Gastrocnemius medialis (tissue), 4 donors: ENCODE measurements at regions of chr1 and their contacts with region 1.

Region 1: GRCh38 chr1:202009326-202010179 is 834 bp upstream of the ELF3 start:
- DNase-seq: peak; percentile 33
- ATAC-seq: peak; percentile 72 to 83
- H3K4me3 ChIP-seq: no peak overlapping the region
- H3K27ac ChIP-seq: no peak overlapping the region
- H3K4me1 ChIP-seq: no peaks in the 10 kb centered on the region
- H3K27me3 ChIP-seq: no peaks in the 10 kb centered on the region
- CTCF ChIP-seq: peak; percentile 50 to 88 (median 78)
- POLR2A ChIP-seq: no peak

Region 2: GRCh38 chr1:202112839-202113672 is 103.5 kb after region 1 on chr1:
- in situ Hi-C with region 1: loop called (anchors 5 to 10 kb)
- intact Hi-C with region 1: no loop called
- DNase-seq: no peak
- ATAC-seq: peak; percentile 62 to 66
- H3K4me3 ChIP-seq: no peak overlapping the region
- H3K27ac ChIP-seq: peak overlapping the region in 1 of 4 donors; percentile 61
- H3K4me1 ChIP-seq: peaks cover 9 to 14% of the 10 kb centered on the region in 2 donors
- H3K27me3 ChIP-seq: no peaks in the 10 kb centered on the region
- CTCF ChIP-seq: no peak
- POLR2A ChIP-seq: no peak

Region 3: GRCh38 chr1:202122639-202123335 is 113.2 kb after region 1 on chr1 and contains the start of gene GPR37L1:
- in situ Hi-C with region 1: loop called (anchors 5 to 10 kb)
- intact Hi-C with region 1: loop called (anchors 1 kb)
- DNase-seq: no peak
- ATAC-seq: peak; percentile 40 to 43
- H3K4me3 ChIP-seq: no peak within 1 kb of the TSS
- H3K27ac ChIP-seq: no peak within 1 kb of the TSS
- H3K4me1 ChIP-seq: no peaks in the 10 kb centered on the region
- H3K27me3 ChIP-seq: no peaks in the 10 kb centered on the region
- CTCF ChIP-seq: peak in 3 of 5 experiments; percentile 19 to 34 (median 26)
- POLR2A ChIP-seq: no peak
- total RNA-seq, gene GPR37L1: 0.04 to 0.10 TPM in 2 of 4 donors, not detected in the others

Region 4: DNA sequence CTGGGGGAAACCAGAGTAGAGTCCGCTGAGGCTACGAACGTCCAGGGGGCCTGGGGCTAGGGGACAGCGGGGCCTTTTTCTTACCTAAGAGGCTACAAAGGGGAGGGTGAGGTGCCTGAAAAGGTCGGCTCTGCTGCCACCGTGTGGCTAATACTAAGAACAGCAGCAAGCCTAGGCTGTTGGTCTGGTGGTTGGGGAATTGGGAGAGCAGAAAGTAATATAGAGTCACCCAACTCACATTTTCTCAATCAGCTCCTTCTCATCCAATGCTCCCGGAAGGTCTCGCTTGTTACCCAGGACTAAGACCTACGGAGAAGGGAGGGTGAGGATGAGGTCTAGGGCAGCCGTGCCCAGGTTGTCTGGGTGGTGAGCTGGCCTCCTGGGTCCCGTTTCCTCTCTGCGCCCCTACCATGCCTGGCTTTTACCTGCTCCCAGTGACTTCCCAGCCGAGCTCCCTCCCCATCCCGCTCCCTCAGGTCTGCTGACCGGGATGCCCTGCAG is 125.7 kb after region 1 on chr1:
- in situ Hi-C with region 1: no loop called
- intact Hi-C with region 1: loop called (anchors 1 kb)
- DNase-seq: peak in 1 of 2 donors; percentile 40
- ATAC-seq: peak; percentile 74 to 78
- H3K4me3 ChIP-seq: no peak overlapping the region
- H3K27ac ChIP-seq: no peak overlapping the region
- H3K4me1 ChIP-seq: peaks cover 5 to 14% of the 10 kb centered on the region in 2 donors
- H3K27me3 ChIP-seq: no peaks in the 10 kb centered on the region
- CTCF ChIP-seq: peak; percentile 49 to 93 (median 74)
- POLR2A ChIP-seq: no peak

Region 5: DNA sequence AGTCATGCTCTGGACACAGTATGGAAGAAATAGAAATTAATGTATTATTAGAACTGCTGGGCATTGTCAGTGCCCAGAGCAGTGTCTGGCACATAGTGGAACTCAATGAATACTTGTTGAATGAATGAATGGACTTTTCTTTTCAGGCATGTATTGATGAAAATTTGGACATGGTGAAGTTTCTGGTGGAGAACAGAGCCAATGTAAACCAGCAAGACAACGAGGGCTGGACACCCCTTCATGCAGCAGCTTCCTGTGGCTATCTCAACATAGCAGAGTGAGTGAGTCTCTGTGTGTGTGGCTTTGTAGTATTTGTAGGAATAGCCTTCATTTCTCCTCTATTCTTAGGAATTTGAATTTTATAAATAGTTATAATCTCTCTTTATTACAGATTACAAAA is 407.1 kb after region 1 on chr1:
- in situ Hi-C with region 1: no loop called
- intact Hi-C with region 1: no loop called
- DNase-seq: no peak
- ATAC-seq: no peak
- H3K4me3 ChIP-seq: no peak overlapping the region
- H3K27ac ChIP-seq: peak overlapping the region; percentile 22 to 98 (median 66)
- H3K4me1 ChIP-seq: peaks cover 65 to 69% of the 10 kb centered on the region in 2 donors
- H3K27me3 ChIP-seq: no peaks in the 10 kb centered on the region
- CTCF ChIP-seq: no peak
- POLR2A ChIP-seq: no peak